Activated CD4-positive, alpha-beta T cell treated with anti-CD3 and anti-CD28 coated beads for 36 hours (primary cell): ENCODE measurements at regions of chr12 and their contacts with region 1.

Region 1: GRCh38 chr12:96335270-96335669 is 65.0 kb downstream of the CDK17 start:
- DNase-seq: peak; percentile 26
- ATAC-seq: peak; percentile 92
- H3K4me3 Mint-ChIP-seq: no peak overlapping the region
- H3K27ac Mint-ChIP-seq: peak overlapping the region; percentile 43
- H3K4me1 Mint-ChIP-seq: peaks cover 40% of the 10 kb centered on the region
- H3K27me3 Mint-ChIP-seq: no peaks in the 10 kb centered on the region

Region 2: DNA sequence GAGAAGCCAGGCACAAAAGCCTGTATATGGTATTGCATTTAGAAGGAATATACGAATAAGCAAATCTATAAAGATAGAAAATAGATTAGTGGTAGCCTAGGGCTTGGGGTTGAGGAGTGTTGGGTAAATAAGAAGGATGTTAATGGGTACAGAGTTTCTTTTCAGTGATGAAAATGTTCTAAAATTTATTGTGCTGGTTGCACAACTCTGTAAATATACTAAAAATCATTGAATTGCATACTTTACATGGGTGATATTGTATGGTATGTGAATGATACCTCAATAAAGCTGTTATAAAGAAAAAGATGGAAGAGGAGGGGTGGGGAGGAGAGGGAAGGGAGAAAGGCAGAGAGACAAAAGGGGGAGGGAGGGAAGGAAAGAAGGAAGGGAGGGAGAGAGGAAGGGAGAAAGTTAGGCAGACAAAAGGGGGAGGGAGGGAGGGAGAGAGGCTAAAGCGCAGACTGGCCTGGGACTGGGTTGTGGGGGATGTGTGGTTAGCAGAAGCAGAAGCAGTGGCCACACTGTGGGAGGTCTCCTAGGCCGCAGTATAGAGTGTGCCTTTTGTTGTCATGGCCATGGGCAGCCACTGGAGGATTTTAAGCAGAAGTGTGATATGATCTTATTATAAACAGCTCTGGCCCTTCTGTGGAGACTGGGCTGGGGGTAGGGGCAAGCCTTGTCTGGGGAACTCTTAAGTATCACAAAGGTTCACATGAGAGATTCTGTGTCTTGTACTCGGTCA is 214.7 kb before region 1 on chr12:
- CTCF ChIA-PET with region 1: no interaction called
- POLR2A ChIA-PET with region 1: no interaction called
- intact Hi-C with region 1: no loop called
- DNase-seq: no peak
- ATAC-seq: peak; percentile 16
- H3K4me3 Mint-ChIP-seq: no peak overlapping the region
- H3K27ac Mint-ChIP-seq: no peak overlapping the region
- H3K4me1 Mint-ChIP-seq: peaks cover 12% of the 10 kb centered on the region
- H3K27me3 Mint-ChIP-seq: no peaks in the 10 kb centered on the region

Region 3: DNA sequence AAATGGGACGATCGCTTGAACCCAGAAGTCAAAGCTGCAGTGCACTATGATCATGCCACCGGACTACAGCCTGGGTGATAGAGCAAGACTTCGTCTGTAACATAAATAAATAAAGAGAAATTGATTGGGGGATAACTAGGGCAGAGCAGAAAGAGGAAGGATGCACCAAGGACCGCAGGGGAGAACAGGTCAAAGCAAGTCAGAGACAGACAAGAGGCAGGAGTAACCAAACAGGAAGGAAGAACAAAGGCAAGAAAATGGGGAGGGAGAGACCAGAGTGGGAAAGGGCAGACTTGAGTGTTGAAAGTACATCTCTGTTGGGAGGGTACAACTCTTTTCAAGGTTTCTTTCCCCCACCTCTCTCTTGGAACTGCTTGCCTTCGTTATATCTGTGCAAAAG is 191.9 kb before region 1 on chr12:
- CTCF ChIA-PET with region 1: no interaction called
- POLR2A ChIA-PET with region 1: no interaction called
- intact Hi-C with region 1: no loop called
- DNase-seq: no peak
- ATAC-seq: no peak
- H3K4me3 Mint-ChIP-seq: no peak overlapping the region
- H3K27ac Mint-ChIP-seq: peak overlapping the region; percentile 34
- H3K4me1 Mint-ChIP-seq: peaks cover 25% of the 10 kb centered on the region
- H3K27me3 Mint-ChIP-seq: no peaks in the 10 kb centered on the region

Region 4: DNA sequence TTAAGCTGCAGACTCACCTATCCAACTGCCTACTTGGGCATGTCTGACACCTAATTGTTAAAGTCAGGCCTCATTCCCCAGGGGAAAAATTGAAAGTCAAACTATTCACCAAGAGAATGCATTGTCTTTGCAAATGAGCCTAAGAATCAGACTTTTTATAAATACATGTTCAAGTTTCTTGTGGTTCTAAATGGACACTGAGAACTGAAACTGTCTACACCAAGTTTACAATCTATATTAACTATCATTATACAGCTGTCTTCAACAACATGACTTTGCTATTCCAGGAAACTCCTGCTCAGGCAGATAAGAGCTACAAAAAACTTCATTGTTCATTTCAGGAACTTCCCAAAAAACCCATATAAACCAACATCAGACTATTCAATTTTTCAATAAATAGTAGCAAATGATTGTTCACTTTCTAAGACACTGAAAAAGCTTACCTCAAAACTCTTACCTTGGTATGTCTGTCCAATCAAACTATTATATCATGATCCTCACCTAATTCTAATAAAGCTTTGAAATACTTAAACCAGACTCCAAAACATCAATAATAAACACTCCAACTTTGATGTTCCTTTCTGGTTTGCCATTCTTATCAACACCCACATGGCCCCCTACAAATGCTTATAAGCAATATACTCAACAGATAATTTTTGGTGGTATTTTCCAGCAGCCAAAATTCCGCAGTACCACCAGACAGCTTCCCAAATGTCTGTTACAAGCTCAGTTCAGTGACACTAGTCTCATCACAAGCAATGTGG is 40.8 kb after region 1 on chr12:
- CTCF ChIA-PET with region 1: no interaction called
- POLR2A ChIA-PET with region 1: no interaction called
- intact Hi-C with region 1: loop called (anchors 1 to 5 kb)
- DNase-seq: no peak
- ATAC-seq: no peak
- H3K4me3 Mint-ChIP-seq: no peak overlapping the region
- H3K27ac Mint-ChIP-seq: peak overlapping the region; percentile 79
- H3K4me1 Mint-ChIP-seq: peaks cover 82% of the 10 kb centered on the region
- H3K27me3 Mint-ChIP-seq: no peaks in the 10 kb centered on the region

Region 5: DNA sequence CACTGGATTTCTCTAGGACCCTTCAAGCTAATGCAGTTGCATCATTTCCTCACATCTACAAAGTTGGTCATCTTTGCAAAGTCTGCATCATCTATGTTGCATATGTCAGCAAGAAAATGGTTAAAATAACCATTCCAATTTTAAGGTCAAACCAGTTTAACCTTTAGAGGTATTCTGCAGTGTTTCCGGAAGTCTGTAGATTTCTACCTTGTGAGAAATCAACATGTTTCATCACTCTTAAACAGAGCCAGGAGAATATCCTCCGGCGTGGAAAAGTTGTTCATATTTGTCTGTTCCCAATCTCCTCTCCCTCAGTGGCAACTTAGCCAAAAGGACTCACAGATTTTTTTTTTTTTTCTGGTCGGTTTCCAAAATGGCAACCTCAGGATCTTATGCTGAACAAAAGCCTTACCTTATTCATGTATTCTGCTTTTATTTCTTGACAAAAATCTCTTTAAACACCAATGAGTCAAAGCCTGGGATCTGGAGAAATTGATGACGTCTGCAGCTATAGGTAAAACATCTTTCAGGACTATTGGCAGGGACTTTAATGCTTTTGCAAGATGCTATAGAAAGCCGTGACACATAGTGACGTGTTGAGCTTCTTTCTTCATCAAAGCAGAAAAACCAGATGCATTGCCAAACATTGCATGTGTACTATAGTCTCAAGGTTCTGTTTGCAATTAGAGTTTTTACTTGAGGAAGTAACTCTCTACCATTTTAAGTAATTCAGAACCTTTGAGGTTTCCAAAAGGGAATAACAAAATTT is 80.9 kb after region 1 on chr12:
- CTCF ChIA-PET with region 1: no interaction called
- POLR2A ChIA-PET with region 1: no interaction called
- intact Hi-C with region 1: no loop called
- DNase-seq: no peak
- ATAC-seq: no peak
- H3K4me3 Mint-ChIP-seq: no peak overlapping the region
- H3K27ac Mint-ChIP-seq: no peak overlapping the region
- H3K4me1 Mint-ChIP-seq: peaks cover 22% of the 10 kb centered on the region
- H3K27me3 Mint-ChIP-seq: no peaks in the 10 kb centered on the region